ENCODE measurements at regions of chr18 and their contacts with region 1.

Region 1: DNA sequence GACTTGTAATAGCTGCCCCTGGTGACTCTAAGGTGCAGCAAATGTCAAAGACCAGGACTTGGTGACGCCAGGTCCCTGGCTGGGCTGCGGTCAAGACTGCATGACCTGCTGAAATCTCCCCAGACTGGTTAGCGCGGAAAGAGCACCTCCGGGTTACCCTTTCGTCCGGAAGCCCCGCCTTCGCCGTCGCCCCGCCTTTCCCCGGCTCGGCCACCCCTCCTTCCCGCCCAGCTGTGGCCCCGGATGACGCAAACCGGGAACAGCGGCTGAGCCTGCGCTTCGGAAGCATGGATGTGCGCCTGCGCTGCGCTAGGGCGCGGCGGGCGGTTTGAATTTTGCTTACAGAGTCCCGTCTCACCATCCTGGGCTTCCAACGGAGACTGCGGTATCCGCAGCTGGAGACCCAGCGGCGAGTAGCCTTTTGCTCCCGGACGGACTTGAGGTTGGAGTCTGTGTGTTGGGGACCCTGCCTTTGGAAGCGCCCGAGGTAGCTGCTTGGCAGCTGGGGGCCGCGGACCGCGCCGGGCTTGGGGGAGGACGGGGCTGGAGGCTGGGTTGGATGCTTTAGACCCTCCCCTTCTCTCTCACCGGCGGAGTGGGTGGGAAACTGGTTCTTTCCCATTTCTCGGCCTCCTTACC is at the start of gene SKA1:
- DNase-seq: peak; percentile 95
- H3K4me3 Mint-ChIP-seq: peak within 1 kb of the TSS; percentile 88
- H3K27ac Mint-ChIP-seq: peak within 1 kb of the TSS; percentile 87
- H3K4me1 Mint-ChIP-seq: peaks cover 2% of the 10 kb centered on the region
- H3K27me3 Mint-ChIP-seq: peaks cover 5% of the 10 kb centered on the region
- total RNA-seq, gene SKA1: 36.1 to 36.3 TPM

Region 2: DNA sequence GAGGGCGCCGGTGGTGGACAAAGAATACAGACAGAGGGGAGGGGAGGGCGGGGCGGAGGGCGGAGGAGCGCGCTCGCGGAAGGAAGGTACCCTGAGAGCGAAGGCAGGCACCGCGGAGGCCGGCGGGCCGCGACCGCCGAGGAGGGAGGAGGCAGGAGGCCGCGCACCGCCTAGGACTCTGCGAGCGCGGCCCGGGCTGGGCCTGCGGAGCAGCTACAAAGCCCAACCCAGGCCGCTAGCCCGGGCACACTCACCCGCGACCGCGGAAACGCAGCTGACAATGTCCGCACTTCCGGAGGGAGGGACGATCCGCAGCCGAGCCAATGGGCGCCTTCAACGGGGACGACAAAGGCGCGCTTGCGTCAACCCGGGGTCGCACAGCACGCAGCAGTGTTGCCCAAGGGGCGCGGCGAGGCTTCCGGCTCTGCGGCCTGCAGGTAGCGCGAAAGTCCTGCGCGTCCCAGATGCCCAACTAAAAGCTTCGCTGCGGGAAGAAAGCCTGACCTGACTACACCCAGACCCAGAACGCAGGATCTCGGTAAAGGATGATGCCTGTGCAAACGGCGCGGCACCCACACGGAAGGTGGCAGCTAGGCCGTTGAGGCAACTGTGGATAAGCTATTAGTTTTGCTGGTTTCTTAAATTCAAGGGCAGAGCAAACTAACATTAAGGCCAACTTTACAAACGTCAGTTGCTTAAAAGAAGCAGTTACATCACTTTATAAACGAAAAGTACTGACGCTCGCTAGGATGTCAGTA is 887.7 kb before region 1 on chr18 and contains the start of gene C18orf32:
- CTCF ChIA-PET with region 1: no interaction called
- intact Hi-C with region 1: loop called (anchors 2 kb)
- DNase-seq: peak; percentile 94
- H3K4me3 Mint-ChIP-seq: peak within 1 kb of the TSS; percentile 94
- H3K27ac Mint-ChIP-seq: peak within 1 kb of the TSS; percentile 94
- H3K4me1 Mint-ChIP-seq: peaks cover 63% of the 10 kb centered on the region
- H3K27me3 Mint-ChIP-seq: no peaks in the 10 kb centered on the region
- total RNA-seq, gene C18orf32: 24.1 to 26.6 TPM

Region 3: GRCh38 chr18:49813319-49814146 is 561.3 kb before region 1 on chr18 and contains the start of gene ACAA2:
- CTCF ChIA-PET with region 1: no interaction called
- intact Hi-C with region 1: loop called (anchors 2 kb)
- DNase-seq: peak; percentile 80
- H3K4me3 Mint-ChIP-seq: peak within 1 kb of the TSS; percentile 90
- H3K27ac Mint-ChIP-seq: peak within 1 kb of the TSS; percentile 96
- H3K4me1 Mint-ChIP-seq: peaks cover 36% of the 10 kb centered on the region
- H3K27me3 Mint-ChIP-seq: no peaks in the 10 kb centered on the region
- total RNA-seq, gene ACAA2: 67.9 to 69.8 TPM

Region 4: GRCh38 chr18:50281295-50281971 is 93.4 kb before region 1 on chr18 and contains the start of gene MBD1:
- CTCF ChIA-PET with region 1: no interaction called
- intact Hi-C with region 1: loop called (anchors 1 kb)
- DNase-seq: peak; percentile 96
- H3K4me3 Mint-ChIP-seq: peak within 1 kb of the TSS; percentile 97
- H3K27ac Mint-ChIP-seq: peak within 1 kb of the TSS; percentile 84
- H3K4me1 Mint-ChIP-seq: peaks cover 36% of the 10 kb centered on the region
- H3K27me3 Mint-ChIP-seq: no peaks in the 10 kb centered on the region
- total RNA-seq, gene MBD1: 66.4 to 69.0 TPM

Region 5: DNA sequence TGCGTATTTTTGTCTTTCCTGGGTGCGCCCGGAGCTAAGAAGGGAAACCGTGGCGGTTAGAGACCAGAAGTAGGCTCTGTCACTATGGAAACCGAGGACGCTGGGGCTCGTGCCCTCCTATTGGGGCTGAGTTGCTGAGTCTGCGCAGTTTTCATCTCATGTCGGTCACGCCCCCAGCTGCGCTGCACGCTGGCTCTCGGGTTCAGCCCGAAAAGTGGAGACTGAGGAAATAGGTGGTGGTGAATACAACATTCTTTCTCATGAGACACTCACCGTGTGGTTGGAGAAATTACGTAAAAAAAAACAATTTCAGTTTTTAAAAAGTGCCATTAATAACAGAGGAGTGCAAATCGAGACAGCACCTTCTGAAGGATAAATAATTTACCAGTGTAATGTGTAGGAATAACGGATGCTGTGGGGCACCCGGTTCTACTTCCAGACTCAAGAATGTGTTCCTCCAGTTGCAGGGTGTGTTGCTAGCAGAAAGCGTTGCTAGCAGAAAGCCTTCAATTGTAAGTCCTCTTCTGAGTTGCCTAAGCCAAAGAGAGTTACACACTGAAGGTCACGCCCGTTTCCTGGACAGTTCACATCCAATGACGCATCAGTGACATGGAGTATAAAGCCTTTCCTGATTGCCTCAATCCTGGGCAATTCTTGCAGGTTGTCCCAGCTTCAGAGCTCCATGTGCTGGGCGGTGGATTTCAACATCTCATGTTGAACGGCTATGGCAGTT is 67.0 kb before region 1 on chr18:
- CTCF ChIA-PET with region 1: no interaction called
- intact Hi-C with region 1: loop called (anchors 1 kb)
- DNase-seq: peak; percentile 96
- H3K4me3 Mint-ChIP-seq: peak overlapping the region; percentile 85
- H3K27ac Mint-ChIP-seq: peak overlapping the region; percentile 52
- H3K4me1 Mint-ChIP-seq: peaks cover 10% of the 10 kb centered on the region
- H3K27me3 Mint-ChIP-seq: peaks cover 11% of the 10 kb centered on the region

Measured in activated naive CD4-positive, alpha-beta T cell treated with anti-CD3 and anti-CD28 coated beads for 36 hours (primary cell).